K562 (cell line): ENCODE measurements at regions of chr14 and their contacts with region 1.

Region 1: GRCh38 chr14:103546652-103547454 is 15.6 kb downstream of the BAG5 start:
- DNase-seq: peak; percentile 71 to 75 (median 75)
- ATAC-seq: peak; percentile 93
- H3K4me3 ChIP-seq: no peak overlapping the region
- H3K27ac ChIP-seq: no peak overlapping the region
- H3K4me1 ChIP-seq: peaks cover 0 to 88% of the 10 kb centered on the region in 2 experiments; a peak in 2 of 5 replicates
- H3K27me3 ChIP-seq: no peaks in the 10 kb centered on the region
- CTCF ChIP-seq: peak; percentile 83 to 86 (median 85)
- EP300 ChIP-seq: no peak
- POLR2A ChIP-seq: no peak
- RAD21 ChIP-seq: peak; percentile 75 to 91

Region 2: DNA sequence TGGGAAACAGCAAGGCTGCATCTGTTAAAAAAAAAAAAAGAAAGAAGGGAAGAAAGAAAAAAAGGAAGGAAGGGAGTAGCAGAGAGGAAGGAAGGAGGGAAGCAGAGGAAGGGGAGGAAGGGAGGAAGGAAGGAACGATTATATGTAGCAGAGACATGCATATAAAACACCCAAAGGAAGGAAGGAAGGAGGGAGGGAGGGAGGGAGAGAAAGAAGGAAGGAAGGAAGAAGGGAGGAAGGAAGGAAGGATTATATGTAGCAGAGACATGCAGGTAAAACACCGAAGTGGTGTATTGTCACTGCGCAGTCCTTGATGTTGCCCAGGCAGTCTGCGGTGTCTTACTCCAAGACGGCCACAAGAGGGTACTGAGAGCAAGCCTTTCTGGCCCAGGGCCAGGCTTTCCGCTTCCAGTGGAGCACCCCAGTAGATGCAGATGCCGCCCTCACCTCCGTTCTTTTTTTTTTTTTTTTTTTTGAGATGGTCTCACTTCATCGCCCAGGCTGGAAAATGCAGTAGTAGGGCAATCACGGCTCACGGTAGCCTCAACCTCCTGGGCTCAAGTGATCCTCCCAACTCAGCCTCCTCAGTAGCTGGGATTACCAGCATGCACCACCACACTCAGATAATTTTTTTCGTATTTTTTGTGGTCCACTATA is 468.6 kb before region 1 on chr14:
- CTCF ChIA-PET with region 1: no interaction called
- POLR2A ChIA-PET with region 1: no interaction called
- in situ Hi-C with region 1: no loop called
- intact Hi-C with region 1: loop called (anchors 10 kb)
- DNase-seq: peak; percentile 63 to 87 (median 70)
- ATAC-seq: peak; percentile 67
- H3K4me3 ChIP-seq: no peak overlapping the region
- H3K27ac ChIP-seq: no peak overlapping the region
- H3K4me1 ChIP-seq: peaks cover 3 to 37% of the 10 kb centered on the region in 2 experiments; a peak in 4 of 5 replicates
- H3K27me3 ChIP-seq: no peaks in the 10 kb centered on the region; a peak in 1 of 5 replicates
- CTCF ChIP-seq: peak; percentile 78 to 81 (median 78)
- EP300 ChIP-seq: no peak
- POLR2A ChIP-seq: no peak
- RAD21 ChIP-seq: peak; percentile 24 to 73; a peak in 3 of 4 replicates

Region 3: DNA sequence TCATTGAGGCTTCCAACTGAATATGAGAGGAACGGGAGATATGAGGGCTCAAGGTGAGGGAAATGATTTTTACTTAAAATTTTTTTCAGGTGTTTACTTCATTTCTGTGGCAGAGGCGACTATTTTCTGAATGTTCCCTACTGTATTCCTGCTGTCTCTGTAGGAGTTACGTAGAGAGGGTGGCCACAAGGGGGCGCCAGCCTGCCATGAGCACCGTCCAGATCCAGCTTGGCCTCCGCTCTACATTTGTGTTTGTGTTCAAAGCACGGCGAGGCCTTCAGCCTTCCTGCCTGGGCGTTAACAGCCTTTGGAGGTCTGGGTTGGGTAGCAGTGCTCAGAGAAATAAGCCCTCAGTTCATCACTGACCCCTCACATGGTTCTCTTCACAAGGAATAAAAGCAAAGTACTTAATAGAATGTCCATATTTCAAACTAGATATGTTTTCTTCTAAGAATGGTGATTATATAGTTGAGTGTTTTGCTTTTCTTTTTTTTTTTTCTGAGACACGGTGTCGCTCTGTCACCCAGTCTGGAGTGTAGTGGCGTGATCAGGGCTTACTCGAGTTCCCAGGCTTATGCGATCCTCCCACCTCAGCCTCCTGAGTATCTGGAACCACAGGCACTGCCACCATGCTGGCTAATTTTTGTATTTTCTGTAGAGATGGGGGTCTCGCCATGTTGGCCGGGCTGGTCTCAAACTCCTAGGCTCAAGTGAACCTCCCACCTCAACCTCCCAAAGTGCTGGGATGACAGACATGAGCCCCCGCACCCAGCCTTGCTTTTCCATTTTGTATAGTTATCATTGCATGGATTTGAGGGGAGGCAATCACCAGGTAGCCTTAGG is 46.5 kb before region 1 on chr14:
- CTCF ChIA-PET with region 1: interaction called, 7 read pairs
- POLR2A ChIA-PET with region 1: no interaction called
- in situ Hi-C with region 1: no loop called
- intact Hi-C with region 1: loop called (anchors 5 kb)
- DNase-seq: peak; percentile 64 to 85 (median 70)
- ATAC-seq: peak; percentile 99
- H3K4me3 ChIP-seq: no peak overlapping the region
- H3K27ac ChIP-seq: peak overlapping the region; percentile 27; the same call in 2 of the 3 replicates
- H3K4me1 ChIP-seq: peaks cover 3 to 4% of the 10 kb centered on the region in 2 experiments; a peak in 4 of 5 replicates
- H3K27me3 ChIP-seq: no peaks in the 10 kb centered on the region
- CTCF ChIP-seq: peak; percentile 76 to 86 (median 78)
- EP300 ChIP-seq: no peak
- POLR2A ChIP-seq: no peak
- RAD21 ChIP-seq: peak; percentile 46 to 65; a peak in 3 of 4 replicates

Region 4: DNA sequence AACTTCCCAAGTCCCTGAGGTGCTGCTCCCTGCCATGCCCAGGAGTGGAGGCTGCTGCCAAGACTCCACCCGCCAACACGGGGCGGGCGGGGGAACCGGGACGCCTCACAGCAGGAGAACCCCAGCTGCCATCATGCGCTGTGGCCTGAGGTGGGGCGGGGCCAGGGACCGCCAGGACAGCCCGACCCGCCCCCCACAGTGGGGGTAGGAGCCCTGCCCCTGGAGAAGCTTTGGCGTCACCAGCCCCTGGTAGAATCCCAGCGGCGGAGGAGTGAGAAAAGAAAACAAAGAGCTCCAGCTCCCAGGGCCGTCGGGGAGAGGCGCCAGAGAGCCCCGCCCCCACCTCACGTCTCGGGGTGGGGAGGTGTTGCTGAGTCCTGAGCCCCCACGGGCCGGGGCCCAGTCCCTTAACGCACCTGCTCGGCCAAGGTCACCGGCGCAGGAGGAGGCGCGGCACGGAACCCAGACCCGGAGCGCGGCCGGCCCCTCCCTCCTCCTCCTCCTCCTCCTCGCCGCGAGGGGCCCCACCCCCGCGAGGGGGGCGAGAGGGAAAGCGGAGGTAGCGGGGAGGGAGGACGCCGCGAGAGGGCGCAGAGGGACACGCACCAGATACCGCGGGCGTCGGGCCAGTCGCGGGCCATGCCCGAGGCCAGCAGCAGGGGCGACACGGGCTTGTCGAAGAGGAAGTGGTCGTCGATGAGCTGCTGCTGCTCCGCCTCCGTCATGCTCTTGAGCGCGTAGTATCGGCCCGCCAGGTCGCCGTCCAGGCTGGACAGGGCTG is 26.0 kb before region 1 on chr14:
- CTCF ChIA-PET with region 1: interaction called, 19 read pairs
- POLR2A ChIA-PET with region 1: interaction called, 8 read pairs
- in situ Hi-C with region 1: no loop called
- intact Hi-C with region 1: loop called (anchors 1 kb)
- DNase-seq: peak; percentile 76 to 88 (median 82)
- ATAC-seq: peak; percentile 74
- H3K4me3 ChIP-seq: peak overlapping the region; percentile 60
- H3K27ac ChIP-seq: peak overlapping the region; percentile 83
- H3K4me1 ChIP-seq: peaks cover 41 to 85% of the 10 kb centered on the region in 2 experiments
- H3K27me3 ChIP-seq: no peaks in the 10 kb centered on the region
- CTCF ChIP-seq: peak; percentile 58 to 83 (median 71)
- EP300 ChIP-seq: no peak
- POLR2A ChIP-seq: no peak; the same call in 1 of the 2 replicates
- RAD21 ChIP-seq: peak in 1 of 2 experiments; percentile 58; a peak in 2 of 4 replicates

Region 5: GRCh38 chr14:103606963-103607668 is 60.3 kb after region 1 on chr14:
- CTCF ChIA-PET with region 1: no interaction called
- POLR2A ChIA-PET with region 1: no interaction called
- in situ Hi-C with region 1: no loop called
- intact Hi-C with region 1: no loop called
- DNase-seq: peak; percentile 38 to 66 (median 43)
- ATAC-seq: peak; percentile 88
- H3K4me3 ChIP-seq: no peak overlapping the region
- H3K27ac ChIP-seq: no peak overlapping the region
- H3K4me1 ChIP-seq: peaks cover 0 to 10% of the 10 kb centered on the region in 2 experiments; a peak in 3 of 5 replicates
- H3K27me3 ChIP-seq: peaks cover 0 to 5% of the 10 kb centered on the region in 2 experiments; a peak in 1 of 5 replicates
- CTCF ChIP-seq: peak; percentile 22 to 41 (median 27); a peak in 3 of 6 replicates
- EP300 ChIP-seq: no peak
- POLR2A ChIP-seq: no peak
- RAD21 ChIP-seq: peak in 1 of 2 experiments; percentile 44; a peak in 2 of 4 replicates